Head of caudate nucleus (tissue), 42 donors: ENCODE measurements at regions of chr1 and their contacts with region 1.

Region 1: DNA sequence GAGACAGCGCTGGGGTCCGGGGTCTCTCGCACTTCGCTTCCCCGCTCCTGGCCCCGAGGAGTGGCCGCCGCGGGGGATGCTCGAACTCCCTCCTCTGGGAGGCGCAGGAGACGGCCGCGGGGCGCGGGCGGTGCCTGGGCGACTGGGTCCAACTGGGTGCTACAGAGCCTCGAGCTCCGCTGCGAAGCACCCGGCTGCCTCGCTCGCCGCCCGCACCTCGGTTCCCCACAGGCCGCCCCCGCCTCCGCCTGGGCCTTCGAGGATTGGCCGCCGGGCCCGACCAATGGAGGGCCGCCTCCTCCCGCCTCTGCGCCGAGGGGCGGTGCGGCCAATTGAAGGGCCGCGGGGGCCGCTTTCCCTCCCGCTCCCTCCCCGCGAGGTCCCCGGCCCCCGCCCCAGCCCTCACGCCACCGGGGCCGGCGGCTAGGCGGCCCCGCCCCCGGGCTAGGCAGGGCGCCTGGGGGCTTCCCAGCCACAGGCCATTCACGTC is at the start of gene CNN3:
- DNase-seq: peak; percentile 77 to 96 (median 92)

Region 2: GRCh38 chr1:94873522-94874351 is 53.2 kb before region 1 on chr1:
- intact Hi-C with region 1: loop called (anchors 5 kb)
- DNase-seq: peak; percentile 40 to 93 (median 74)

Region 3: GRCh38 chr1:95043141-95043980 is 116.4 kb after region 1 on chr1:
- intact Hi-C with region 1: loop called (anchors 2 kb)
- DNase-seq: peak; percentile 44 to 95 (median 88)